Posterior cingulate gyrus (tissue), 11 donors: ENCODE measurements at regions of chr17 and their contacts with region 1.

Region 1: DNA sequence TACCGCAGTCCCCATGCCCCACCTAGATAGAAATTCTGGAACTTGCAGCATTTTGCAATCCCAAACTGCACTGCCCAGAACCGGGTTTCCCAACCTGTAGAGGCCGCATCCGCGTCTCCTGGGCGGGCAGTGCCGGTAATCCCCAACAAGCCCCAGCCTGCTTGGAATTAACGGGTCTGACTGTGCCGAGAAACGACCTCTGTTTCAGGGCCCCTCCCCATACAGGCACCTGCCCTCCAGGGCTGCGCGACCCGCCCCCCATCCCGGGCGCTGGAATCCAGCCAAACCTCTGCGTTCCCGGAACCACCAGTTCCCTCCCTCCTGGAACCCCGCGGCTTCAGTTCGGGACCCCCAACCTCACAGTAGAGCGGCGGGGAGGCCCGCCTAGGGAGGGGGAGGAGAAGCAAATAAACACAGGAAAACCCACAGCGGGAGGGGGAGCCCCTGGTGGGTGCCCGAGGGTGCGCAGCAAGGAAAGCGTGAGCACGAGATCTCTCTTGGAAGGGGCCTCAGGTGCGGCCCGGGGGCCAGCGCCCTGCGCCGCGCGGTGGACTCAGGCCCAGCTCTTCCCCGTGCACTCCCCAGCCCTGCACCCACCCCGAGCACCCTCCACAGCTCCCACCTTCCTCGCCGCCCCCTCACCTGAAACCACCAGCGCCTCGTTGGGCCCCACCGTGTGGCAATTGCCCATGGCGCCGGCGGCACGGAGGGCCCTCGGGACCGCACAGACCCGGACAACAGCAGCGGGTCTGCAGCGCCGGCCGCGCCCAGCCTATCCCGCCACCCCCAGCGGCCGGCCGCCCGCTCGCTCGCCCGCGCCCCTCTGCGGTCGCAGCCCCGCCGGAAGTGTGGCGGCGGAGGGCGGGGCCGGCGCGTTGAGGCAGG is at the start of gene FLOT2:
- DNase-seq: peak in 9 of 10 donors; percentile 39 to 91 (median 55)

Region 2: GRCh38 chr17:28854457-28855350 is 42.4 kb before region 1 on chr17 and contains the start of gene ERAL1:
- intact Hi-C with region 1: loop called (anchors 5 kb)
- DNase-seq: peak; percentile 81 to 98 (median 90)

Region 3: GRCh38 chr17:28865946-28866752 is 31.0 kb before region 1 on chr17:
- intact Hi-C with region 1: no loop called
- DNase-seq: no peak